GM12878 (cell line): ENCODE measurements at regions of chr2 and their contacts with region 1.

Region 1: GRCh38 chr2:72862239-72862988 is 24.8 kb upstream of the SPR start:
- DNase-seq: peak; percentile 37
- ATAC-seq: peak; percentile 97
- H3K4me3 ChIP-seq: 0 out of 2 replicates have a peak overlapping the region, but pooled peaks have one; percentile 23
- H3K27ac ChIP-seq: no peak overlapping the region
- H3K4me1 ChIP-seq: peaks cover 7% of the 10 kb centered on the region
- H3K27me3 ChIP-seq: no peaks in the 10 kb centered on the region
- CTCF ChIP-seq: peak; percentile 94 to 99 (median 97); a peak in 5 of 6 replicates
- EP300 ChIP-seq: no peak
- POLR2A ChIP-seq: no peak
- RAD21 ChIP-seq: peak; percentile 70

Region 2: GRCh38 chr2:72770879-72771461 is 91.4 kb before region 1 on chr2:
- CTCF ChIA-PET with region 1: interaction called, 52 read pairs
- POLR2A ChIA-PET with region 1: no interaction called
- RAD21 ChIA-PET with region 1: interaction called, 9 read pairs
- SMC1A ChIA-PET with region 1: interaction called, 8 read pairs
- in situ Hi-C with region 1: loop called (anchors 5 kb)
- intact Hi-C with region 1: loop called (anchors 1 kb)
- DNase-seq: peak; percentile 37
- ATAC-seq: peak; percentile 76
- H3K4me3 ChIP-seq: no peak overlapping the region
- H3K27ac ChIP-seq: no peak overlapping the region
- H3K4me1 ChIP-seq: no peaks in the 10 kb centered on the region
- H3K27me3 ChIP-seq: no peaks in the 10 kb centered on the region
- CTCF ChIP-seq: peak; percentile 62 to 87 (median 66)
- EP300 ChIP-seq: no peak
- POLR2A ChIP-seq: no peak
- RAD21 ChIP-seq: peak; percentile 95

Region 3: DNA sequence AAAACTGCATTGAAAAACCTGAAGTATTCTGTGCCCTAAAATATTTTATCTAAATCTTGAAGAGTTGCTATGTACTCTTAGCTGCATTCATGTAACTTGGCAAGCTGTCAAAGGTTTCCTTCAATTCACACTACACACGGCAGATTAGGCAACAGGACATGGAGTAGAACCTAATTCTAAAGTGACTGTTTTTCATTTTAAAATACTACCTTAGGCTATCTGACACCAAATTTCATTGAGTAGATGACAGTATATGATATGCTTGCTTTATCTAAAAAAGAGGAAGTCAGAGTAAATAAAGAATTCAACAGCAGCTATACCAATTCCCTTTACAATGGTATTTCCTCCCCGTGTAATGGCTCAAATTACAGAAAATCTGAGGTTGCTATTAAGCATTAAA is 81.9 kb before region 1 on chr2:
- CTCF ChIA-PET with region 1: interaction called, 13 read pairs
- POLR2A ChIA-PET with region 1: interaction called, 3 read pairs
- RAD21 ChIA-PET with region 1: interaction called, 3 read pairs
- SMC1A ChIA-PET with region 1: interaction called, 5 read pairs
- in situ Hi-C with region 1: no loop called
- intact Hi-C with region 1: no loop called
- DNase-seq: no peak
- ATAC-seq: peak; percentile 41; the same call in 1 of the 3 replicates
- H3K4me3 ChIP-seq: no peak overlapping the region
- H3K27ac ChIP-seq: no peak overlapping the region
- H3K4me1 ChIP-seq: no peaks in the 10 kb centered on the region
- H3K27me3 ChIP-seq: no peaks in the 10 kb centered on the region
- CTCF ChIP-seq: no peak
- EP300 ChIP-seq: no peak
- POLR2A ChIP-seq: no peak
- RAD21 ChIP-seq: no peak

Region 4: GRCh38 chr2:72815655-72816268 is 46.7 kb before region 1 on chr2:
- CTCF ChIA-PET with region 1: interaction called, 11 read pairs
- POLR2A ChIA-PET with region 1: no interaction called
- RAD21 ChIA-PET with region 1: no interaction called
- SMC1A ChIA-PET with region 1: interaction called, 5 read pairs
- in situ Hi-C with region 1: no loop called
- intact Hi-C with region 1: no loop called
- DNase-seq: no peak
- ATAC-seq: no peak
- H3K4me3 ChIP-seq: no peak overlapping the region
- H3K27ac ChIP-seq: no peak overlapping the region
- H3K4me1 ChIP-seq: no peaks in the 10 kb centered on the region
- H3K27me3 ChIP-seq: no peaks in the 10 kb centered on the region
- CTCF ChIP-seq: no peak
- EP300 ChIP-seq: no peak
- POLR2A ChIP-seq: no peak
- RAD21 ChIP-seq: no peak

Region 5: GRCh38 chr2:72822794-72823193 is 39.6 kb before region 1 on chr2:
- CTCF ChIA-PET with region 1: interaction called, 5 read pairs
- POLR2A ChIA-PET with region 1: no interaction called
- RAD21 ChIA-PET with region 1: interaction called, 4 read pairs
- SMC1A ChIA-PET with region 1: no interaction called
- in situ Hi-C with region 1: no loop called
- intact Hi-C with region 1: loop called (anchors 2 kb)
- DNase-seq: no peak
- ATAC-seq: no peak
- H3K4me3 ChIP-seq: no peak overlapping the region
- H3K27ac ChIP-seq: no peak overlapping the region
- H3K4me1 ChIP-seq: no peaks in the 10 kb centered on the region
- H3K27me3 ChIP-seq: no peaks in the 10 kb centered on the region
- CTCF ChIP-seq: no peak
- EP300 ChIP-seq: no peak
- POLR2A ChIP-seq: no peak
- RAD21 ChIP-seq: no peak

Region 6: GRCh38 chr2:72833084-72833709 is 29.2 kb before region 1 on chr2:
- CTCF ChIA-PET with region 1: interaction called, 17 read pairs
- POLR2A ChIA-PET with region 1: no interaction called
- RAD21 ChIA-PET with region 1: interaction called, 4 read pairs
- SMC1A ChIA-PET with region 1: no interaction called
- in situ Hi-C with region 1: no loop called
- intact Hi-C with region 1: no loop called
- DNase-seq: no peak
- ATAC-seq: no peak
- H3K4me3 ChIP-seq: no peak overlapping the region
- H3K27ac ChIP-seq: no peak overlapping the region
- H3K4me1 ChIP-seq: peaks cover 15% of the 10 kb centered on the region
- H3K27me3 ChIP-seq: no peaks in the 10 kb centered on the region; a peak in 1 of 4 replicates
- CTCF ChIP-seq: no peak
- EP300 ChIP-seq: no peak
- POLR2A ChIP-seq: no peak
- RAD21 ChIP-seq: no peak

Region 7: GRCh38 chr2:73071360-73072133 is 209.1 kb after region 1 on chr2 and contains the start of gene SFXN5:
- CTCF ChIA-PET with region 1: no interaction called
- POLR2A ChIA-PET with region 1: no interaction called
- RAD21 ChIA-PET with region 1: no interaction called
- SMC1A ChIA-PET with region 1: no interaction called
- in situ Hi-C with region 1: no loop called
- intact Hi-C with region 1: no loop called
- DNase-seq: peak; percentile 40
- ATAC-seq: peak; percentile 95
- H3K4me3 ChIP-seq: peak within 1 kb of the TSS; percentile 77
- H3K27ac ChIP-seq: peak within 1 kb of the TSS; percentile 86
- H3K4me1 ChIP-seq: no peaks in the 10 kb centered on the region
- H3K27me3 ChIP-seq: peaks cover 0 to under 1% of the 10 kb centered on the region in 2 experiments; a peak in 2 of 4 replicates
- CTCF ChIP-seq: 0 out of 6 replicates have a peak, but pooled peaks of 2 of the 3 experiments have one; percentile 7 to 28
- EP300 ChIP-seq: peak in 1 of 2 experiments; percentile 17; a peak in 1 of 4 replicates
- POLR2A ChIP-seq: peak; percentile 77
- RAD21 ChIP-seq: no peak
- polyA plus RNA-seq, gene SFXN5: 3.3 to 4.0 TPM

Region 8: DNA sequence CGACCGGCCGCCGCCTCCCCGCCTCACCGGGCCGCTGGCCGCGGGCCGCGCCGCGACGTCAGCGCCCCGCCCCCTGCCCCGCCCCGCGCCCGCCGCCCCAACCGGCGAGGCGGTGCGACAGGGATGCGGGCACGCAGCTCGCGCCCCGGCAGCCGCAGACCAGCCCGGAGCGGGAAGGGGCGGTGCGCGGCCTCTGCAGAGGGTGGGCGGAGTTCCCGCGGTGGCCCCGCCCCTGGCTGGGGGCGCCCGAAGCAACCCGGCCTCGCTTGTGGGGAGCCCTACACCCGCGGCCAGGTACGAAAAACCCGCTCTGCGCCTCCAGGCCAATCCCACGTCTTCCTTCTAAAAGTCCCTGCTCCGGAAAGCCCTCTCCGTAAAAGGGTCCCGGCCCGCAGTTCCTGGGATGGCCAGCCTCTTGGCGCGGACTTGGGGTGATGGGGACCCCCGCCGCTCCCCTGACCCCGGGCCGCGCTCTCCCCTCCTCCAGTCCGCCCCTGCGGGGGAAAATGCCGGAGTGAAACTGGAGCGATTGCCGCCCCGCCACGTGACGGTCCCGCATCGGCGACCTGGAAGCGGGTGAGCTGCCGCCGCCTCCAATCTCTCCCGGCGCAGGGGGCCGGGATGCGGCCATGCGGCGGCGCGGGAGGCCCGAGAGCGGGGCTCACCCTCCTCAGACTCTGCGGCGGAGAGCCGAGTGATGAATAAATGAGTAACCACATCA is 250.7 kb after region 1 on chr2 and contains the start of gene RAB11FIP5:
- CTCF ChIA-PET with region 1: no interaction called
- POLR2A ChIA-PET with region 1: no interaction called
- RAD21 ChIA-PET with region 1: no interaction called
- SMC1A ChIA-PET with region 1: no interaction called
- in situ Hi-C with region 1: no loop called
- intact Hi-C with region 1: no loop called
- DNase-seq: no peak
- ATAC-seq: peak; percentile 86
- H3K4me3 ChIP-seq: peak within 1 kb of the TSS; percentile 60; the same call in 1 of the 2 replicates
- H3K27ac ChIP-seq: no peak within 1 kb of the TSS
- H3K4me1 ChIP-seq: no peaks in the 10 kb centered on the region
- H3K27me3 ChIP-seq: peaks cover 6 to 17% of the 10 kb centered on the region in 2 experiments
- CTCF ChIP-seq: no peak
- EP300 ChIP-seq: no peak
- POLR2A ChIP-seq: no peak
- RAD21 ChIP-seq: no peak
- polyA plus RNA-seq, gene RAB11FIP5: 0.07 TPM in 1 of 2 experiments, not detected in the other

Region 9: GRCh38 chr2:73963385-73964120 is 1101.1 kb after region 1 on chr2:
- CTCF ChIA-PET with region 1: no interaction called
- POLR2A ChIA-PET with region 1: no interaction called
- RAD21 ChIA-PET with region 1: no interaction called
- SMC1A ChIA-PET with region 1: no interaction called
- in situ Hi-C with region 1: no loop called
- intact Hi-C with region 1: no loop called
- DNase-seq: peak; percentile 80
- ATAC-seq: peak; percentile 96
- H3K4me3 ChIP-seq: peak overlapping the region; percentile 43; the same call in 1 of the 2 replicates
- H3K27ac ChIP-seq: peak overlapping the region; percentile 88
- H3K4me1 ChIP-seq: peaks cover 20% of the 10 kb centered on the region
- H3K27me3 ChIP-seq: no peaks in the 10 kb centered on the region
- CTCF ChIP-seq: no peak
- EP300 ChIP-seq: peak in 1 of 2 experiments; percentile 18; a peak in 1 of 4 replicates
- POLR2A ChIP-seq: peak; percentile 33; the same call in 1 of the 2 replicates
- RAD21 ChIP-seq: no peak